AG04449 (cell line): ENCODE measurements at regions of chrX and their contacts with region 1.

Region 1: DNA sequence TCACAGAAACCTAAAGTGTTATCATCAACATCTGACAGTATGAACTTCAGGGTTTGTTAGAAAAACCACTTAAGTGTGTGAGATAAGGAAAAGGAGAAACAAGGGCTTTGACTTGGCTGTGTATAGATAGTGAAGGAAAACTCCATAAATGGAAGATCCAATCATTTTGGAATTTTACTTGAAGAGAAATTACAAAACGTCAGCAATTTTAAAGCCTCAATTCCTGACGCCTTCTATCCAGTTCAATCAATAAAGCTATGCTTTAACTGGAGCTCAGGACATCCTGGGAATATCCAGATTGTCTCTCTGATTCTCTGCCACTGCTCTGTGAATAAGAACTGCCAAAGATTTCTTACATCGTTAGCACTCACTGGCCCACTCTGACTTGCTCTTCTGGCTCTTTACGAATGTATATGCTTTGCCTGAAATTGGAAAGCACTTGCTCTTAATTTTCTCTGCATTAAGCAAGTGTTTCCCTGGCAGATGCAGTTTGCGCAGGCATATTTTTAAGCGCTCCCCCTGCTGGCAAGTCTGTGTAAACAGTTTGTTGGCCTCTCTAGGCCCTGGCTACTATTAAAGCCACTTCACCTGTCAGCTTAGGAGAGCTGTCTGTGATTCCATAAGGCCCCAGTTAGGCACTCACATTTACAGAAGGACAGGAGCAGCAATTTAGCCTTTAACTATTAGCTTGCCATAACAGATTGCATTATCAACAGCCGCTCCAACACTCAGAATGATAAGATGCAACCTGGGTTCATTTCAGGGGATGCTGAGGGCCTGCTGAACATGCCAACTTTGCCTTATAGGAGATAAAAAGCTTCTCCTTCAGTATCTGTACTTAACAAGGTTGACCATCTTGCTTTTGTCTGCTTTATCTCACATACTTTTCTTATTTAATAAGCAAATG is 251.4 kb upstream of the DDX53 start:
- DNase-seq: no peak
- H3K4me3 ChIP-seq: no peak overlapping the region
- CTCF ChIP-seq: peak; percentile 37

Region 2: GRCh38 chrX:22135994-22136684 is 612.2 kb before region 1 on chrX:
- CTCF ChIA-PET with region 1: interaction called, 11 read pairs
- POLR2A ChIA-PET with region 1: no interaction called
- DNase-seq: no peak
- H3K4me3 ChIP-seq: no peak overlapping the region
- CTCF ChIP-seq: no peak

Region 3: GRCh38 chrX:22758807-22759481 is 10.6 kb after region 1 on chrX:
- CTCF ChIA-PET with region 1: interaction called, 18 read pairs
- POLR2A ChIA-PET with region 1: no interaction called
- DNase-seq: no peak
- H3K4me3 ChIP-seq: no peak overlapping the region
- CTCF ChIP-seq: no peak